ENCODE measurements at regions of chr20 and their contacts with region 1.

Region 1: GRCh38 chr20:62302341-62303058 is at the start of gene ADRM1:
- DNase-seq: peak; percentile 96
- H3K4me3 Mint-ChIP-seq: peak within 1 kb of the TSS; percentile 91
- H3K27ac Mint-ChIP-seq: peak within 1 kb of the TSS; percentile 99
- H3K4me1 Mint-ChIP-seq: peaks cover 24% of the 10 kb centered on the region
- H3K27me3 Mint-ChIP-seq: no peaks in the 10 kb centered on the region
- total RNA-seq, gene ADRM1: 77.4 to 81.5 TPM

Region 2: DNA sequence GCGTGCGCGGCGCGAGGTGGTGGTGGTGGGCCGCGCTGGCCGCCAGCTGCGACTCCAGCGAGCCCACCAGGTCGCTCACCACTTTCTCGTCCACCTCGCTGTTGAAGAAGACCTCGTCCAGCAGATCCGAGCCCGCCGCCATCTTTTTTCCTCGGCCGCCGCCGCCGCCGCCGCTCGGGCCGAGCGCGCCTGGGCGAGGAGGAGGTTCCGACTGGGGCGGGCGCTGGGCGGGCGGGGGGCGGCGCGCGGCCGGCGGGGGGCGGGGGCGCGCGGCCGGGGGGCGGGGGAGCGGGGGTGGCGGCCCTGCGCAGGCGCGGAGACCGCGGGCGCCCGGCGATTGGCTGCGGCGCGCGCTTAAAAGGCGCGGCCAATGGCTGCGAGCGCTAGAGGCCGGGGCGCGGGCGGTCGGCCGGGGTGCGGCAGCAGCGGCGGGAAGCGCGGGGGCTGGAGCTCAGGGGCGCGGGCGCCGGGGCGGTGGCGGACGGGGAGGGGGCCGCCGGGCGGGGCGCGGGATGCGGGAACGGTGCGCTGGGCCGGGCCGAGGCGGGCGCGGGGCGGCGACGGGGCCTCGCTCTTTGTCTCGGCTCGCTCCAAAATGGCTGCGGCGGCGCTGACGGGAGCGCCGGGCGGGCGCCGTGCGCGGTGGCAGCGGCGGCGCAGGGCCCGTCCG is 236.7 kb before region 1 on chr20 and contains the start of gene TAF4:
- CTCF ChIA-PET with region 1: no interaction called
- intact Hi-C with region 1: loop called (anchors 5 kb)
- DNase-seq: peak; percentile 69
- H3K4me3 Mint-ChIP-seq: peak within 1 kb of the TSS; percentile 84
- H3K27ac Mint-ChIP-seq: peak within 1 kb of the TSS; percentile 90
- H3K4me1 Mint-ChIP-seq: peaks cover 49% of the 10 kb centered on the region
- H3K27me3 Mint-ChIP-seq: no peaks in the 10 kb centered on the region
- total RNA-seq, gene TAF4: 15.0 to 15.4 TPM

Region 3: GRCh38 chr20:62143118-62143973 is 159.2 kb before region 1 on chr20 and contains the starts of genes PSMA7 and SS18L1:
- CTCF ChIA-PET with region 1: no interaction called
- intact Hi-C with region 1: loop called (anchors 1 kb)
- DNase-seq: peak; percentile 82
- H3K4me3 Mint-ChIP-seq: peak within 1 kb of the TSS; percentile 83
- H3K27ac Mint-ChIP-seq: peak within 1 kb of the TSS; percentile 87
- H3K4me1 Mint-ChIP-seq: peaks cover 55% of the 10 kb centered on the region
- H3K27me3 Mint-ChIP-seq: no peaks in the 10 kb centered on the region
- total RNA-seq, gene PSMA7: 287 to 288 TPM
- total RNA-seq, gene SS18L1: 14.5 to 18.0 TPM

Region 4: DNA sequence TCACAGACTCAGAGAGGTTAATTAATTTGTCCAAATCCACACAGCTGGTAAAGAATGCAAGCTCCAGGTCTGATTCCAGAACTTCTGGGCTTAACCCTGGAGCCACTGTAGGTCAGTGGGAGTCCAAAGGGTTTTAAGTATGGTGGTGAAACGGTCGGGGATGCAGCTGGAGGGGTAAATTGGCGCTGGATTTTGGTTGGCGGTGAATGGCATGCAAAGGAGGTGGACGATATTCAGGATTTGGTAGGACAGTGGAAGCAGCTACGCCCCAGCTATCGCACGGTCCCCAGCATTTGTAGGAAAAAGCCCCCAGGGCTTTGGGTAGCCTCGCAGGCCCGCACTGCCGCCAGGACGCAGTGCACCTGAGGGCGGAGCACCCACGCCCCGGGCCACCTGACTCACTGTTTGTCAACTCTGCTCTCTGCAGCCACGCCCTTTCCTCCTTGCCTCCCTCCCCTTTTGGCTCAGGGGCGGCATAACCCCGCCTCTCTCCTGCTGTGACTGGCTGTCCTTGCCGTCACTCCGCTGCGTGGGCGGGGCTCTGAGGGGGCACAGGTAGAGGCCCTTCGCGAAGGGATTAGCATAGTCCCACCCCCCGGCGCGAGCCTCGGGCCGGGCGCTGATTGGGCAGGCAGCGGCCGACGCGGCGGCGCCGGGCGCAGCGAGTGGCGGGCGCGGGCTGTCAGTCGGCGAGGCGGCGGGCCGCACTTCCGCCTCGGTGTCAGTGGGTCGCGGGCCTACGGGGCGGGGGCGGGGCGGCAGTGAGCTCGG is 64.5 kb before region 1 on chr20 and contains the start of gene OSBPL2:
- CTCF ChIA-PET with region 1: no interaction called
- intact Hi-C with region 1: loop called (anchors 1 kb)
- DNase-seq: peak; percentile 100
- H3K4me3 Mint-ChIP-seq: peak within 1 kb of the TSS; percentile 78
- H3K27ac Mint-ChIP-seq: peak within 1 kb of the TSS; percentile 79
- H3K4me1 Mint-ChIP-seq: peaks cover 28% of the 10 kb centered on the region
- H3K27me3 Mint-ChIP-seq: no peaks in the 10 kb centered on the region
- total RNA-seq, gene OSBPL2: 23.6 to 24.7 TPM

Region 5: DNA sequence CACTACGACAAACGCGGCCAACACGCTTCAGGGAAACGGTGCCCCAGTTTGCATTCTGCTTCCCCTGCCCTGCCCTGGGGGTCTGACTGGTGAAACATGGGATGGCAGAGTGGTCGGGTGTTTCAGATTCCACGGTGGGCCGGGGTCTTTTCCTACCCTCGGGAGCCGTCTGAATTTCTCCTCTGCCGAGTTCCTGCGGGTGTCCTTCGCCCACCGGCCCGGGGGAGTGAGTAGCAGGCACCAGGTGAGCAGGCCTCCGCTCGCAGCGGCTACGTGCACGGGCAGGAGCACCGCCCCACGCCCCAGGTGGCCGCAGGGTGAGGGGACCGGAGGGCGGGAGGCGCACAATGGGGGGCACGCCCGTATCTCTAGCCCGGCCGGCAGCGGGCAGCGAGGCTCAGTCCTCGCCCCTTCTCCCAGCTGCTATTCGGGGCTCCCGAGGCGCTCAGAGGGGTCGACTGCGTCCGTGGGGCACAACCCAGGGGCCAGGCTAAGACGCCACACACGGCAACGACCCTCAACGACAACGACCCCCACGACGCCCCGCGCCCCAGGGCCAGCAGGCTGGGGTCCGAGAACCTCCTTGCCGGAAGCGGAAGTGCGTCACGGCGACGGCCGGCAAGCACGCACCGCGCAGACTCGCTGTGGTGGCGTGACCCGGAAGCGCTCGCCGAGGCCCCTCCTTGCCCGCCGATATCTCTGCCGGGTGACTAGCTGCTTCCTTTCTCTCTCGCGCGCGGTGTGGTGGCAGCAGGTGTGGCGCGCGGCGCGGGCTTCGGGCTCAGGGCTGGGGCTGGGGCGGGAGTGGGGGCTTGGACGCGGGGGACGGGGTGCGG is 84.1 kb after region 1 on chr20 and contains the start of gene RPS21:
- CTCF ChIA-PET with region 1: interaction called, 15 read pairs
- intact Hi-C with region 1: loop called (anchors 1 kb)
- DNase-seq: peak; percentile 94
- H3K4me3 Mint-ChIP-seq: peak within 1 kb of the TSS; percentile 87
- H3K27ac Mint-ChIP-seq: peak within 1 kb of the TSS; percentile 76
- H3K4me1 Mint-ChIP-seq: peaks cover 51% of the 10 kb centered on the region
- H3K27me3 Mint-ChIP-seq: no peaks in the 10 kb centered on the region
- total RNA-seq, gene RPS21: 2,995 to 3,072 TPM

Region 6: GRCh38 chr20:62500237-62500864 is 197.9 kb after region 1 on chr20:
- CTCF ChIA-PET with region 1: no interaction called
- intact Hi-C with region 1: loop called (anchors 1 kb)
- DNase-seq: peak; percentile 87
- H3K4me3 Mint-ChIP-seq: no peak overlapping the region
- H3K27ac Mint-ChIP-seq: peak overlapping the region; percentile 69
- H3K4me1 Mint-ChIP-seq: peaks cover 29% of the 10 kb centered on the region
- H3K27me3 Mint-ChIP-seq: peaks cover 7% of the 10 kb centered on the region

Region 7: DNA sequence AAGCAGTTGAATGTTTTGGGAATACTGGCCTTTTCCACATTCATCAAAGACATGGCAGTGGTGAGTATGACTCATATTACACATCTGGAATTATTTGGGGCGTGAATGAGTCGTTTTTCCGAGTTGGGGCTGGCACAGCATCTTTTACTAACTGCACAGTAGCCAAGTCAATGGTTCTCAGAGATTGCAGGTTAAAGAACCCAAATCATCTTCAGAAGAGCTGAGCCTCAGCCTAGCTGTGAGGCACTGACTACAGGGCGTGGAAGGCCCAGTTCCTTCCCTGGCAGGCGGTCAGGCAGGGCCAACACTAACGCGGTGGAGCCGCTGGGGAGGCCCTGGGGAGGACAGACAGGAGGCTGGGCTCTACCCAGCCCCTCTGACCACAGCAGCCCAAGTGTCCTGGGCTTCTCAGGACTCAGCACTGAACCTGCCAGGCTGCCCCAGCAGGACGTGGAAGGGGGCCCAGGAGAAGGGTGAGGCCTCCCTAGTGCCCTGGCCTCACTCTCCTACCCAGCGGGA is 1291.6 kb after region 1 on chr20:
- CTCF ChIA-PET with region 1: no interaction called
- intact Hi-C with region 1: no loop called
- DNase-seq: no peak
- H3K4me3 Mint-ChIP-seq: no peak overlapping the region
- H3K27ac Mint-ChIP-seq: no peak overlapping the region
- H3K4me1 Mint-ChIP-seq: no peaks in the 10 kb centered on the region
- H3K27me3 Mint-ChIP-seq: no peaks in the 10 kb centered on the region